ENCODE measurements at regions of chr16 and their contacts with region 1.

Region 1: GRCh38 chr16:74726716-74727115 is 26.1 kb upstream of the MLKL start:
- DNase-seq: peak; percentile 58 to 86
- H3K4me3 ChIP-seq: no peak overlapping the region
- H3K27ac ChIP-seq: no peak overlapping the region
- H3K4me1 ChIP-seq: peaks cover 2 to 10% (median 5%) of the 10 kb centered on the region in 4 experiments; a peak in 5 of 7 replicates
- H3K27me3 ChIP-seq: 0 out of 7 replicates have a peak, but pooled peaks cover 0 to 2% (median 0%) of the 10 kb centered on the region in 4 experiments
- CTCF ChIP-seq: peak; percentile 59 to 91 (median 83)
- EP300 ChIP-seq: no peak
- POLR2A ChIP-seq: no peak
- RAD21 ChIP-seq: peak; percentile 77 to 82

Region 2: DNA sequence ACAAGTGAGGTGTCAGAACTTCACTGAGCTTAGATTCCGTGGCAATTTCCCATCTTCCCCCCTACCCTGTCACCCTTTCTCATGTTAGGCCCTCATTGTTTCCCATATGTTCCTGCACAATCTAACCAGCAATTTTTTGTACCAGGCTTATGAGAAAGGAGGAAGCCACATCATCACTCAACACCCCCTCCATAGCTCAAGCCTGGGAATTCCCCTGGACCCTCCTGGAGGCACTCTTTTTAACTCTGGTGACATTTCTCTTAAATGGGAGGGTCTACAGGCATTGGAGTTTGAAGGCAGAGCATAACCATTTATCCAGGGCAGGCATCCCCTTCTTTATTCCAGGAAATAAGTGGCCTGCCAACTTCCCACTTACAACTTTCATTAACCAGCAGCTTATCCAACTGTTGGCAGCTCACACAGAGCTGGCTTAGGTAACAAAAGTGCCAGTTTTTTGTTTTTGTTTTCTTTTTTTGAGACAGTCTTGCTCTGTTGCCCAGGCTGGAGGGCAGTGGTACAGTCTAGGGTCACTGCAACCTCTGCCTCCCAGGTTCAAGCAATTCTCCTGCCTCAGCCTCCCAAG is 109.4 kb before region 1 on chr16:
- CTCF ChIA-PET with region 1: no interaction called
- POLR2A ChIA-PET with region 1: no interaction called
- DNase-seq: no peak
- H3K4me3 ChIP-seq: no peak overlapping the region
- H3K27ac ChIP-seq: no peak overlapping the region
- H3K4me1 ChIP-seq: peaks cover 0 to 4% (median under 1%) of the 10 kb centered on the region in 4 experiments; a peak in 2 of 7 replicates
- H3K27me3 ChIP-seq: no peaks in the 10 kb centered on the region
- CTCF ChIP-seq: no peak
- EP300 ChIP-seq: no peak
- POLR2A ChIP-seq: no peak
- RAD21 ChIP-seq: no peak

Region 3: DNA sequence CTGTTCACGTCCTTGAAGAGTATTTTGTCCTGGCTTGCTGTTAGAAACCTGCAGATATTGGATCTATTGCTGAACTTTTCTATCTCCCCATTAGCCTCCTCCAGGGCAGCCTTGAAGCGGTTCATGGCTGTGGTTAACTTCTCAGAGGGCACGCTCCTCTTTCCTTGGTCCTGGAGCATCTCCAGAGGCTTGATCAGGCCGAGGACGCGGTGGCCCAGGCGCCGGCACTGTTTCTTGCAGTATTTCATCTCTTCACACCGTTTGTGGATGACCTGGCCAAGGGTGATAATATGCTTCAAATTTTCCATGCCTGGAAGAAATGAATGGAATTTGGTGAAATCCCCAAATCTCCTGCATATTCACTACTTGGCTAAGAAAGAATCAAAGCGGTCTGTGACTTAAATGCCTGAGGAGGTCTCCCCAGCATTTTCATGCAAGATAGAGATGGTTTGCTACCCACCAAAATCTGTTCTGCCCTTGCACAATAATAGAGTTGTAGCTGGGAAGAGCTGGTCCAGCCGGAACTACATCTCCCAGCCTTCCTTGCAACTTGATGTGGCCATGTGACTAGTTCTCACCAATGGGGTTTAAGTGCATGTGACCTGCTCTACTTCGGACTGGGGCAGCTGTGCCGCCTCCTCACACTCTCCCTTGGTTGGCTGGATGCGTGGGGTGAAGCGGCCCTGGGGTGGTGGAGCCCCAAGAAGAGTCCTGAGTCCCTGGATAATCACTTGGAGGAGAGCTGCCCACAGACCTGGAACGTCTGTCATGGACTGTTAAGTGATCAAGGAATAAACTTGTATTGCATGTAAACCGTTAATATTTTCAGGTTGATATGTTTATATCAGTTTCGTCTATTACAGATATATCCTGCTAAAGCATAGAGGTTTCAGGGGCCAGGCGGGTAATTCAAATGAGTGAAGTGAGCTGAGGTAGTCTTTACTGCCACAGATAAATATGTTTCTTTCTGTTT is 31.0 kb before region 1 on chr16:
- CTCF ChIA-PET with region 1: interaction called, 27 read pairs
- POLR2A ChIA-PET with region 1: no interaction called
- DNase-seq: peak; percentile 41 to 80
- H3K4me3 ChIP-seq: peak overlapping the region; percentile 23 to 56 (median 34); a peak in 5 of 8 replicates
- H3K27ac ChIP-seq: no peak overlapping the region
- H3K4me1 ChIP-seq: peaks cover 0 to 3% (median 2%) of the 10 kb centered on the region in 4 experiments; a peak in 4 of 7 replicates
- H3K27me3 ChIP-seq: peaks cover 0 to 8% (median 3%) of the 10 kb centered on the region in 4 experiments; a peak in 3 of 7 replicates
- CTCF ChIP-seq: no peak
- EP300 ChIP-seq: no peak
- POLR2A ChIP-seq: peak in 1 of 2 experiments; percentile 60; a peak in 1 of 3 replicates
- RAD21 ChIP-seq: no peak

Region 4: GRCh38 chr16:74709441-74709877 is 17.3 kb before region 1 on chr16:
- CTCF ChIA-PET with region 1: interaction called, 576 read pairs
- POLR2A ChIA-PET with region 1: interaction called, 7 read pairs
- DNase-seq: peak; percentile 63 to 91
- H3K4me3 ChIP-seq: no peak overlapping the region
- H3K27ac ChIP-seq: no peak overlapping the region
- H3K4me1 ChIP-seq: no peaks in the 10 kb centered on the region
- H3K27me3 ChIP-seq: peaks cover 0 to 2% (median 0%) of the 10 kb centered on the region in 4 experiments; a peak in 2 of 7 replicates
- CTCF ChIP-seq: peak; percentile 92 to 98 (median 95)
- EP300 ChIP-seq: no peak
- POLR2A ChIP-seq: no peak
- RAD21 ChIP-seq: peak; percentile 96

Region 5: DNA sequence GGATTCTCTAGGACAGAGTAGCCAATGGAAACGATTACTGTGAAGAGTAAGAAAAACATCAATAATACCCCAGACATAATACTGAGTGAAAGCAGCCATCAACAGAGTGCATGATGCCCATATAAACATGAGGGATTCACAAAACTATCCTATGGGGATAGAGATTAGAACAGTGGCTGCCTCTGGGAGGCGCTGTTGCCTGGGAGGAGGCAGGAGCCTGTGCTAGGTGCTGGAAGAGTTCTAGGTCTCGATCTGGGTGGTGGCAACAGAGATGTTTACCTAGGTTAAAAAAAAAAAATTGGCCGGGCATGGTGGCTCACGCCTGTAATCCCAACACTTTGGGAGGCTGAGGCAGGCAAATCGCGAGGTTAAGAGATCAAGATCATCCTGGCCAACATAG is 40.0 kb after region 1 on chr16:
- CTCF ChIA-PET with region 1: interaction called, 27 read pairs
- POLR2A ChIA-PET with region 1: no interaction called
- DNase-seq: peak in 1 of 2 experiments; percentile 67
- H3K4me3 ChIP-seq: no peak overlapping the region
- H3K27ac ChIP-seq: no peak overlapping the region
- H3K4me1 ChIP-seq: no peaks in the 10 kb centered on the region
- H3K27me3 ChIP-seq: no peaks in the 10 kb centered on the region; a peak in 1 of 7 replicates
- CTCF ChIP-seq: peak; percentile 61 to 78 (median 63)
- EP300 ChIP-seq: no peak
- POLR2A ChIP-seq: no peak
- RAD21 ChIP-seq: peak; percentile 62 to 72

Measured in H1 (cell line).